ENCODE measurements at regions of chr1 and their contacts with region 1.

Region 1: DNA sequence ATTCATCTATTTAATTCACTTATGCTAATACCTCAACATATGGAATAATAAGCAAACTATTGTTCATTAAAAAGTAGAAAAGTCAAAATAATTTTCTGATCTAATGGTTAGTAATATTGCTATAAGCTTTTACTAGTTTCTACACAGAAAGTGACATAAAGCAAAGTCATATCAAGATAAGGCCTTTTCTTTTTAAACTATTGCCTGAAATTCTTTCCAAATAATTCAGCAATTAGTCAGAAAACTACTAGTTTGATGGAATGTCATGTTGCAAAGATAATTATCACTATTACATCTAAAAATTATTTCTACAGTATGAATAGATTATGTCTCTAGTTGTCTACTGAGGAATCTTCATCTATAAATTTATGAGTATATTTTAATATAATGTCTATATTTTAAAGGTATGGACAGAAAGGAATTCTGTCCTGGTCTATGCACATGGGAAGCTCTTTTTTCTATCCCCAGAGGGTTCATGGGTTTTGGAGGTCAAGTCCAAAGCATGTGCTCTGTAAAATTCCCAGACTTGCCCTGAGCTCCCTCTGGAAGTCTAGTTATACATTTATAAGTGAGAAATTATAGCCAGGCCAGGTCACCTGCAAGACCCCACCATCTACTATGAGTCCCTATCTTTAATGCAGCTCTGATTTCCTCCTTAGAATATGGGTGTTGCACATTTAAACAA is 84.6 kb upstream of the DPYD start:
- DNase-seq: no peak
- ATAC-seq: no peak
- H3K4me3 ChIP-seq: no peak overlapping the region
- H3K4me3 Mint-ChIP-seq: no peak overlapping the region
- H3K27ac ChIP-seq: no peak overlapping the region
- H3K27ac Mint-ChIP-seq: no peak overlapping the region
- H3K4me1 ChIP-seq: peaks cover 0 to 5% of the 10 kb centered on the region in 2 donors
- H3K4me1 Mint-ChIP-seq: peaks cover 0 to 8% (median 6%) of the 10 kb centered on the region in 7 donors
- H3K27me3 ChIP-seq: no peaks in the 10 kb centered on the region
- H3K27me3 Mint-ChIP-seq: peaks cover 0 to 16% (median 0%) of the 10 kb centered on the region in 5 donors

Region 2: GRCh38 chr1:97913506-97914139 is 91.8 kb before region 1 on chr1:
- CTCF ChIA-PET with region 1: no interaction called
- POLR2A ChIA-PET with region 1: no interaction called
- intact Hi-C with region 1: no loop called
- DNase-seq: no peak
- ATAC-seq: no peak
- H3K4me3 ChIP-seq: no peak overlapping the region
- H3K4me3 Mint-ChIP-seq: peak overlapping the region in 1 of 10 donors; percentile 14
- H3K27ac ChIP-seq: no peak overlapping the region
- H3K27ac Mint-ChIP-seq: no peak overlapping the region
- H3K4me1 ChIP-seq: peaks cover 0 to 13% of the 10 kb centered on the region in 2 donors
- H3K4me1 Mint-ChIP-seq: peaks cover 39 to 75% (median 70%) of the 10 kb centered on the region in 7 donors
- H3K27me3 ChIP-seq: no peaks in the 10 kb centered on the region
- H3K27me3 Mint-ChIP-seq: no peaks in the 10 kb centered on the region

Region 3: DNA sequence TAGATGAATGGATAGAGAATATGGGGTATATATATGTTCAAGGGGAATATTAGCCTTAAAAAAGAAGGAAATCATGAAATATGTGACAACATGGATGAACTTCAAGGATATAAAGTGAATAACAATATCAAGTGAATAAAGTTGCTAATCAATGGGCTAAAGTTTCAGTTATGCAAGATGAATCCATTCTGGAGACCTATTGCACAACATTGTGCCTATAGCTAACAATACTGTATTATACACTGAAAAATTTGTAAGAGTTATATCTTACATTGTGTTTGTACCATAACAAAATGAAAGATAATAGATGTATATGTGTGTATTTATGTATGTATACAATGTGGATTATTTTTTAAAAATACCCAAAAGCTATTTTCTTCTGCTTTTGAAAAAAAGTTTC is 11.7 kb after region 1 on chr1:
- CTCF ChIA-PET with region 1: no interaction called
- POLR2A ChIA-PET with region 1: no interaction called
- intact Hi-C with region 1: loop called in 1 of 2 experiments (anchors 1 kb)
- DNase-seq: no peak
- ATAC-seq: no peak
- H3K4me3 ChIP-seq: no peak overlapping the region
- H3K4me3 Mint-ChIP-seq: no peak overlapping the region
- H3K27ac ChIP-seq: no peak overlapping the region
- H3K27ac Mint-ChIP-seq: no peak overlapping the region
- H3K4me1 ChIP-seq: no peaks in the 10 kb centered on the region
- H3K4me1 Mint-ChIP-seq: no peaks in the 10 kb centered on the region
- H3K27me3 ChIP-seq: no peaks in the 10 kb centered on the region
- H3K27me3 Mint-ChIP-seq: peaks cover 0 to 39% (median 9%) of the 10 kb centered on the region in 5 donors

Region 4: GRCh38 chr1:98030483-98030882 is 25.0 kb after region 1 on chr1:
- CTCF ChIA-PET with region 1: no interaction called
- POLR2A ChIA-PET with region 1: no interaction called
- intact Hi-C with region 1: no loop called
- DNase-seq: no peak
- ATAC-seq: no peak
- H3K4me3 ChIP-seq: no peak overlapping the region
- H3K4me3 Mint-ChIP-seq: no peak overlapping the region
- H3K27ac ChIP-seq: no peak overlapping the region
- H3K27ac Mint-ChIP-seq: no peak overlapping the region
- H3K4me1 ChIP-seq: no peaks in the 10 kb centered on the region
- H3K4me1 Mint-ChIP-seq: peaks cover 0 to 2% (median 0%) of the 10 kb centered on the region in 7 donors
- H3K27me3 ChIP-seq: no peaks in the 10 kb centered on the region
- H3K27me3 Mint-ChIP-seq: peaks cover 7 to 19% (median 15%) of the 10 kb centered on the region in 5 donors

Region 5: DNA sequence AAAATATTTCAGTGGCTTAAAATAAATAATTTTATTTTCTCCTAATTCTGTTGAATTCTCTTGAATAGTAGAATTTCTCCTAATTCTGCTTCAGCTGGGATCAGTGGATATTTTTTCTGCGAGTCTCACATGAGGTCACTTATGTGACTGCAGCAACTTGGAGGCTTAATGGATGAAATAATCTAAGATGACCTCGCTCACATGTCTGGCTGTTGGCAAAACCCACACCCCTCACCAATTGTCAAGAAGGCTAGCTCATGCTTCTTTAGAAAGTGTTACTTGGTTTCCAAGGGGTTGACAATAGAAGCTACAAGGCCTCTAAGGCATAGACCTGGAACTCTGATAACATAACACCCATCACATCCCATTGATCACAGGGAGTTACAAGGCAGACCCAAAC is 72.2 kb after region 1 on chr1:
- CTCF ChIA-PET with region 1: no interaction called
- POLR2A ChIA-PET with region 1: no interaction called
- intact Hi-C with region 1: no loop called
- DNase-seq: no peak
- ATAC-seq: no peak
- H3K4me3 ChIP-seq: no peak overlapping the region
- H3K4me3 Mint-ChIP-seq: no peak overlapping the region
- H3K27ac ChIP-seq: no peak overlapping the region
- H3K27ac Mint-ChIP-seq: no peak overlapping the region
- H3K4me1 ChIP-seq: no peaks in the 10 kb centered on the region
- H3K4me1 Mint-ChIP-seq: peaks cover 0 to 4% (median 0%) of the 10 kb centered on the region in 7 donors
- H3K27me3 ChIP-seq: no peaks in the 10 kb centered on the region
- H3K27me3 Mint-ChIP-seq: peaks cover 0 to 5% (median 0%) of the 10 kb centered on the region in 5 donors

Measured in naive thymus-derived CD4-positive, alpha-beta T cell (primary cell).